Calu3 (cell line): ENCODE measurements at regions of chr5 and their contacts with region 1.

Region 1: DNA sequence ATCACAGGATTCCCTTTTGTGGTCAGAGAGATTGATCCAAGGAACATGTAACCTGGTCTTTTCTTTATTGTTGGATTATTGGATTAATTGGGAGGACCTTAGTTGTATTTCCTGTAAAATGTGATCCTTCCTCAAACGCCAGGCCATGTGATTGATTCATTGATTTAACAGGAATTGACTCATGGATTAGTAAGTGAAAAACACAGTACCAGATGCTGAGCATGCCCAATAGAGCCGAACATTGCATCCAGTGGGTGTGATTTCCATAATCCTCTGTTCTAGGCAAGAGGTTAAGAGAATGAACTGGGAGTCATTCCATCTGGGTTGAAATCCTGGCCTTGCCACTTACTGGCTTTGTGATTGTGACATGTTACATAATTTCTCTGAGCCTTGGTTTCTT is 522.3 kb downstream of the MAT2B start:
- DNase-seq: no peak
- H3K4me3 Mint-ChIP-seq: no peak overlapping the region
- H3K27ac Mint-ChIP-seq: no peak overlapping the region
- H3K4me1 Mint-ChIP-seq: no peaks in the 10 kb centered on the region
- H3K27me3 Mint-ChIP-seq: no peaks in the 10 kb centered on the region
- CTCF ChIP-seq: no peak

Region 2: GRCh38 chr5:163544836-163545235 is 482.9 kb before region 1 on chr5:
- CTCF ChIA-PET with region 1: no interaction called
- intact Hi-C with region 1: no loop called
- DNase-seq: no peak
- H3K4me3 Mint-ChIP-seq: no peak overlapping the region
- H3K27ac Mint-ChIP-seq: no peak overlapping the region
- H3K4me1 Mint-ChIP-seq: no peaks in the 10 kb centered on the region
- H3K27me3 Mint-ChIP-seq: no peaks in the 10 kb centered on the region
- CTCF ChIP-seq: no peak

Region 3: DNA sequence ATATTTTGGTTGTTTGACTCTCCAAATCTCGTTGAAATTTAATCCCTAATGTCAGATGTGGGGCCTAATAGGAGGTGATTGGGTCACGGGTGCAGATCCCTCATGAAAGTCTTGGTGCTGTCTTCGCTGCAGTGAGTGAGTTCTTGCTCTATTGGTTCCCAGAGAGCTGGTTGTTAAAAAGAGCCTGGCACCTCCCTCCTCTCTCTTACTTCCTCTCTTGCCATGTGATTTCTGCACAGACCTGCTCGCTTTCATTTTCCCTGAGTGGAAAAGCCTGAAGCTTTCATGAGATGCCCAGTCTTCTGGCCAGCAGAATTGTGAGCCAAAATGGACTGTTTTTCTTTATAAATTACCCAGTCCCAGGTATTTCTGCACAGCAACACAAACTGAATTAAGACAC is 300.7 kb before region 1 on chr5:
- CTCF ChIA-PET with region 1: no interaction called
- intact Hi-C with region 1: no loop called
- DNase-seq: peak; percentile 9
- H3K4me3 Mint-ChIP-seq: no peak overlapping the region
- H3K27ac Mint-ChIP-seq: no peak overlapping the region
- H3K4me1 Mint-ChIP-seq: peaks cover 18% of the 10 kb centered on the region
- H3K27me3 Mint-ChIP-seq: no peaks in the 10 kb centered on the region
- CTCF ChIP-seq: no peak

Region 4: GRCh38 chr5:163908253-163908652 is 119.5 kb before region 1 on chr5:
- CTCF ChIA-PET with region 1: no interaction called
- intact Hi-C with region 1: no loop called
- DNase-seq: no peak
- H3K4me3 Mint-ChIP-seq: no peak overlapping the region
- H3K27ac Mint-ChIP-seq: no peak overlapping the region
- H3K4me1 Mint-ChIP-seq: no peaks in the 10 kb centered on the region
- H3K27me3 Mint-ChIP-seq: no peaks in the 10 kb centered on the region
- CTCF ChIP-seq: no peak

Region 5: DNA sequence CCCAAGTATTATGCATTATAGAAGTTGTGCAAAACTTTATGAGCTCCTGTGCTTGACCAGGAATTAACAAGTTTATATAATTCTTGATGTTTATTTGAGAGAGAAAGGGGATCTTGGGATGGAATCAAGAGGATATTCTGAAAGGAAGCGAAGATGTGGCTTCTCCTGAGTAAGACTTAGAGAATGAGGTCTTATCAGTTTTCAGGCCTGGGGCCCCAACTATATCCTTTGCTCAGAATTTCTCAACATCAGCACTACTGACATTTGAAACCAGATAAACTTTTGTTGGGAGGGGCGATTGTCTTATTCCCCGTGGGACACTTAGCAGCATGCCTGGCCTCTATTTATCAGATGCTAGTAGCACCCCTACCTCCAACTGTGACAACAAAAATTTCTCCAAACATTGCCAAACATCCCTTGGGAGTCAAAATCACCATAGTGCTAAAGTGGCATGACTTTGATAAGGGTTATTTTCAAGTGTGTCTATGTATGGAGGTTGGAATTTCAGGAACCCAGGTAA is 45.3 kb after region 1 on chr5:
- CTCF ChIA-PET with region 1: no interaction called
- intact Hi-C with region 1: loop called (anchors 2 kb)
- DNase-seq: no peak
- H3K4me3 Mint-ChIP-seq: no peak overlapping the region
- H3K27ac Mint-ChIP-seq: no peak overlapping the region
- H3K4me1 Mint-ChIP-seq: no peaks in the 10 kb centered on the region
- H3K27me3 Mint-ChIP-seq: peaks cover 8% of the 10 kb centered on the region
- CTCF ChIP-seq: no peak